ENCODE measurements at regions of chr7 and their contacts with region 1.

Region 1: DNA sequence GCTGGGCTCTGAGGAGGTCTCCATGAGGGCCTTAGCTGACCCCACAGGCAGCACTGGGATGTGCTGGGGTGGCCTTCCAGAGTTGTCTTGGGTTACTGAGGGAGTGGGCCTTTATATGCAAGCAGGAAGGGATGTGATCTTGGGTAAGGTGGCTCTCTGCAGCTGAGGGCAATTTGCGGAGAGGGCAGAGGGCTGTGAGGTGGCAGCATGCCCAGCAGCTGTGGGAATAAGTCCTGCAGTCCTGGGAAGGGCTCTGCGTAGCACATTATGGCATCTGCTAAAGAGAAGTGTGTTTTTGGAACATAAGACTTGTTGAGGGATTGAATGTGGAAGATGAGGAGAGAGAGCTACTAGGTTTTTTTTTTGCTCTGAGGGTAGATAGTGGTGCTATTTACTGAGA is 99.6 kb upstream of the KMT2E start:
- DNase-seq: no peak
- ATAC-seq: peak; percentile 44; the same call in 2 of the 3 replicates
- H3K4me3 ChIP-seq: 0 out of 2 replicates have a peak overlapping the region, but pooled peaks have one; percentile 8
- H3K27ac ChIP-seq: no peak overlapping the region
- H3K4me1 ChIP-seq: no peaks in the 10 kb centered on the region; a peak in 1 of 5 replicates
- H3K27me3 ChIP-seq: peaks cover 9 to 19% of the 10 kb centered on the region in 2 experiments; a peak in 4 of 5 replicates
- CTCF ChIP-seq: no peak
- EP300 ChIP-seq: no peak
- POLR2A ChIP-seq: no peak
- RAD21 ChIP-seq: no peak

Region 2: GRCh38 chr7:104883718-104884452 is 30.5 kb before region 1 on chr7:
- CTCF ChIA-PET with region 1: interaction called, 16 read pairs
- POLR2A ChIA-PET with region 1: interaction called, 4 read pairs
- in situ Hi-C with region 1: loop called (anchors 5 kb)
- intact Hi-C with region 1: loop called (anchors 1 kb)
- DNase-seq: peak; percentile 90 to 93 (median 91)
- ATAC-seq: peak; percentile 99
- H3K4me3 ChIP-seq: no peak overlapping the region
- H3K27ac ChIP-seq: peak overlapping the region; percentile 74
- H3K4me1 ChIP-seq: peaks cover 0 to 11% of the 10 kb centered on the region in 2 experiments; a peak in 3 of 5 replicates
- H3K27me3 ChIP-seq: no peaks in the 10 kb centered on the region
- CTCF ChIP-seq: peak; percentile 91 to 99 (median 91)
- EP300 ChIP-seq: peak; percentile 33
- POLR2A ChIP-seq: no peak
- RAD21 ChIP-seq: peak; percentile 67 to 78

Measured in K562 (cell line).